CD4-positive, alpha-beta memory T cell (primary cell): ENCODE measurements at regions of chr15 and their contacts with region 1.

Region 1: GRCh38 chr15:84755736-84756527 is 7.5 kb downstream of the ZNF592 start:
- DNase-seq: no peak
- H3K4me3 ChIP-seq: no peak overlapping the region
- H3K4me3 Mint-ChIP-seq: peak overlapping the region in 3 of 8 donors; percentile 6 to 46 (median 7)
- H3K27ac ChIP-seq: no peak overlapping the region
- H3K27ac Mint-ChIP-seq: peak overlapping the region in 5 of 7 donors; percentile 15 to 73 (median 66)
- H3K4me1 ChIP-seq: peaks cover 75% of the 10 kb centered on the region
- H3K4me1 Mint-ChIP-seq: peaks cover 37 to 53% (median 45%) of the 10 kb centered on the region in 4 donors
- H3K27me3 ChIP-seq: no peaks in the 10 kb centered on the region
- H3K27me3 Mint-ChIP-seq: no peaks in the 10 kb centered on the region

Region 2: DNA sequence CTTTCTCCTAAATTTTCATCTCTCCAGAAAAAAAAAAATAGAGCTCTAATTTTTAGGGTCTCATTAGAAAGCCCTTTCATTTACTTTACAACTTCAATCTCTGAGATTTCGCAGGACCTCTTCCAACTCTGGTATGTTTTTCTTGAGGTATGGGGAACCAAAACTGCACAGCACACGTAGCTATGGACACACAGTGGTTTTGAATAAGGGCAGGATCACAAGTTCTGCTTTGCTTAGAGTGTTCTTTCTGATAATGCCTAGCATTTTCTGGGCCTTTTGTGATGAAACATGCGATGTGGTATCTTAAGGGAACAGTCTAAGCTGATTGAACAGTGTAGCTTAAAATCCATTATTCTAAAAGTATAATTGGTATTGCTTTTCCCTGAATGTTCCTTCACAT is 17.8 kb after region 1 on chr15:
- CTCF ChIA-PET with region 1: no interaction called
- POLR2A ChIA-PET with region 1: no interaction called
- intact Hi-C with region 1: no loop called
- DNase-seq: no peak
- H3K4me3 ChIP-seq: no peak overlapping the region
- H3K4me3 Mint-ChIP-seq: no peak overlapping the region
- H3K27ac ChIP-seq: no peak overlapping the region
- H3K27ac Mint-ChIP-seq: peak overlapping the region in 2 of 7 donors; percentile 16 to 72
- H3K4me1 ChIP-seq: peaks cover 6% of the 10 kb centered on the region
- H3K4me1 Mint-ChIP-seq: peaks cover 31 to 51% (median 34%) of the 10 kb centered on the region in 4 donors
- H3K27me3 ChIP-seq: no peaks in the 10 kb centered on the region
- H3K27me3 Mint-ChIP-seq: no peaks in the 10 kb centered on the region

Region 3: DNA sequence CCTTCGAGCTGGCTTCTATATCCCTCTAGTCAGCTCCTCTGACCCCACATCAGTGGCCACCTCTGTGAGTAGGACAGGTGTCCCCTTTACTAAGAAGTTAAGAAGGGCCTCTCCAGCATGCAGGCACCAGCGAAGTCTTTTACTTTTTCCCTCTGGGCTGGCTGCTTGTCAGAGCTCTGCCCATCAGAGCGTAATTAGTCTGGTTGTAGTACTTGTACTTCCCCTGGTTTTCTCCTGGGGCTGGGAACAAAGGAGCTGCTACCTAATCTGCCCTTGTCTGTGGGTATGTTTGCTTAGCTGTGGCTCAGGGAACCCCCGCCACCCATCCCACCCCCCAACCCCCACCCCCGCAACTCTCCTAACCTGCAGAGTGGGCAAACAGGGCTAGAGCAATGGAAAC is 33.8 kb after region 1 on chr15:
- CTCF ChIA-PET with region 1: no interaction called
- POLR2A ChIA-PET with region 1: no interaction called
- intact Hi-C with region 1: loop called (anchors 5 kb)
- DNase-seq: no peak
- H3K4me3 ChIP-seq: no peak overlapping the region
- H3K4me3 Mint-ChIP-seq: no peak overlapping the region
- H3K27ac ChIP-seq: no peak overlapping the region
- H3K27ac Mint-ChIP-seq: no peak overlapping the region
- H3K4me1 ChIP-seq: peaks cover 8% of the 10 kb centered on the region
- H3K4me1 Mint-ChIP-seq: peaks cover 14 to 38% (median 30%) of the 10 kb centered on the region in 4 donors
- H3K27me3 ChIP-seq: no peaks in the 10 kb centered on the region
- H3K27me3 Mint-ChIP-seq: no peaks in the 10 kb centered on the region